ENCODE measurements at regions of chr11 and their contacts with region 1.

Region 1: GRCh38 chr11:69630009-69630408 is 10.9 kb upstream of the CCND1 start:
- DNase-seq: no peak
- ATAC-seq: peak; percentile 77; the same call in 1 of the 2 replicates
- H3K4me3 ChIP-seq: no peak overlapping the region
- H3K27ac ChIP-seq: no peak overlapping the region
- H3K4me1 ChIP-seq: peaks cover under 1% of the 10 kb centered on the region; the same call in 1 of the 2 replicates
- H3K27me3 ChIP-seq: no peaks in the 10 kb centered on the region
- CTCF ChIP-seq: no peak

Region 2: DNA sequence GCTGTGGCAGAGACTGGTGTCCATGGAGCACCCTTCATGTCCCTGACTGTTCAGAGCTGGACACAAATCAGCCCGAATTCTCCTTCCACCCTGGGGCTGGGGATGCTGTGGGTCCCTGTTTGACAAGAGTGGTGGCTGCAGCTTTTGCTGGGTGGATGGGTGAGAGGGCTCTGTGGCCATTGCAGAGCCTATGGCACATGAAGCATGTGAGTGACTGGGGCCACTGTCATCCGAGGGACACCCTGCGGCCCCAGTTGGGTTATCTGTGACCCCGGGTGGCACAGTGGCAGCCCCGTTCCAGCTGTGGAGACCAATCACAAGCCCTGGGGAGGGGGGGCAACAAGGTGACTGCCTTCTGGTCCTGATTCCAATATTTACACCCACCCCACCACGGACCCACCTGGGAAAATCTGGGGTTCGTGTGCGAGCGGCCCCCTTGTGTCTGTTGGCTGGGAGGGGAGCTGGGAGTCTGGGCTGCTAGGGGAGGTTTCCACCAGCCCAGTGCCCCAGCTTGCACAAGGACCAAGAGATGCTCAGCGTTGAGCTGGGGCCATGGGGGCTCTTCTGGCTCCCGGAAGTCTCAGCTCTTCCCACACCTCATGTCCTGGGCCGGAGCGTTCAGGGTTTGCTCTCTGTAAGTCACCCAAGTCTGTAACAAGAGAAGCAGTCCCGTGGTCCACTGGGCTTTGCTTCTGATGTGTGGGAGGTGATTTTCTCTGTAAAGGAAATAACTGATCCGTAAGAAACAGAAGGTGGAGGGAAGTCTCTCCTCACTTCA is 968.3 kb before region 1 on chr11:
- CTCF ChIA-PET with region 1: no interaction called
- POLR2A ChIA-PET with region 1: interaction called, 10 read pairs
- in situ Hi-C with region 1: no loop called
- intact Hi-C with region 1: no loop called
- DNase-seq: no peak
- ATAC-seq: no peak
- H3K4me3 ChIP-seq: no peak overlapping the region
- H3K27ac ChIP-seq: no peak overlapping the region
- H3K4me1 ChIP-seq: 0 out of 2 replicates have a peak, but pooled peaks cover 2% of the 10 kb centered on the region
- H3K27me3 ChIP-seq: no peaks in the 10 kb centered on the region
- CTCF ChIP-seq: no peak

Measured in Panc1 (cell line).